Endothelial cell of umbilical vein (primary cell): ENCODE measurements at regions of chr5 and their contacts with region 1.

Region 1: GRCh38 chr5:38441453-38442246 is 114.8 kb downstream of the LIFR start:
- DNase-seq: peak; percentile 89
- H3K4me3 ChIP-seq: no peak overlapping the region
- H3K27ac ChIP-seq: no peak overlapping the region
- H3K4me1 ChIP-seq: no peaks in the 10 kb centered on the region
- H3K27me3 ChIP-seq: no peaks in the 10 kb centered on the region
- CTCF ChIP-seq: peak; percentile 89 to 96
- POLR2A ChIP-seq: no peak

Region 2: GRCh38 chr5:38382898-38383297 is 58.8 kb before region 1 on chr5:
- CTCF ChIA-PET with region 1: interaction called, 100 read pairs
- POLR2A ChIA-PET with region 1: no interaction called
- dilution Hi-C with region 1: no loop called
- intact Hi-C with region 1: loop called (anchors 1 kb)
- DNase-seq: peak; percentile 72
- H3K4me3 ChIP-seq: no peak overlapping the region
- H3K27ac ChIP-seq: no peak overlapping the region
- H3K4me1 ChIP-seq: no peaks in the 10 kb centered on the region
- H3K27me3 ChIP-seq: peaks cover under 1 to 2% of the 10 kb centered on the region in 2 experiments
- CTCF ChIP-seq: peak; percentile 80 to 81
- POLR2A ChIP-seq: no peak

Region 3: DNA sequence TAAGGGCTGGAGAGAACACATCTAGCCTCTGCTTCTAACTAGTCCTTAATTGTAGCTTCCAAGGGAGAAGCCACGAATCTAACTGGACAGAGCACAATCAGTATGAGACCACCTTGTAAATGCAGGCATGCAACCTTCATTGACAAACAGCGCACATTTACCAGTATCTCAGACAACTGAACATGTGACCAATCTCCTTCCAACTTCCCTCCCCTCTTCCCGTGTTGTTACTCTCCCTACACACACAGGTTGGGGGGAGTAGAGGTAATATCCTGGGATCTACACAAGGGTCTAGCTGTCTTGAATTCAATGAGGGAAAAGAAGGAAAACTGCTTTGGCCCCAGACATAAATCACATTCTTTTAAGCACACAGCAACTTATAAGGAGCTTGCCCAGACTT is 37.2 kb after region 1 on chr5:
- CTCF ChIA-PET with region 1: interaction called, 24 read pairs
- POLR2A ChIA-PET with region 1: no interaction called
- dilution Hi-C with region 1: no loop called
- intact Hi-C with region 1: no loop called
- DNase-seq: no peak
- H3K4me3 ChIP-seq: no peak overlapping the region
- H3K27ac ChIP-seq: no peak overlapping the region
- H3K4me1 ChIP-seq: peaks cover 4% of the 10 kb centered on the region
- H3K27me3 ChIP-seq: no peaks in the 10 kb centered on the region
- CTCF ChIP-seq: no peak
- POLR2A ChIP-seq: no peak

Region 4: GRCh38 chr5:38528162-38528703 is 86.6 kb after region 1 on chr5:
- CTCF ChIA-PET with region 1: interaction called, 17 read pairs
- POLR2A ChIA-PET with region 1: no interaction called
- dilution Hi-C with region 1: no loop called
- intact Hi-C with region 1: no loop called
- DNase-seq: no peak
- H3K4me3 ChIP-seq: no peak overlapping the region
- H3K27ac ChIP-seq: no peak overlapping the region
- H3K4me1 ChIP-seq: no peaks in the 10 kb centered on the region
- H3K27me3 ChIP-seq: no peaks in the 10 kb centered on the region
- CTCF ChIP-seq: no peak
- POLR2A ChIP-seq: no peak

Region 5: GRCh38 chr5:38615981-38616451 is 174.4 kb after region 1 on chr5:
- CTCF ChIA-PET with region 1: interaction called, 12 read pairs
- POLR2A ChIA-PET with region 1: no interaction called
- dilution Hi-C with region 1: no loop called
- intact Hi-C with region 1: no loop called
- DNase-seq: no peak
- H3K4me3 ChIP-seq: no peak overlapping the region
- H3K27ac ChIP-seq: no peak overlapping the region
- H3K4me1 ChIP-seq: no peaks in the 10 kb centered on the region
- H3K27me3 ChIP-seq: no peaks in the 10 kb centered on the region
- CTCF ChIP-seq: no peak
- POLR2A ChIP-seq: no peak

Region 6: GRCh38 chr5:38780950-38781349 is 339.3 kb after region 1 on chr5:
- CTCF ChIA-PET with region 1: interaction called, 31 read pairs
- POLR2A ChIA-PET with region 1: no interaction called
- dilution Hi-C with region 1: no loop called
- intact Hi-C with region 1: no loop called
- DNase-seq: peak; percentile 62
- H3K4me3 ChIP-seq: no peak overlapping the region
- H3K27ac ChIP-seq: no peak overlapping the region
- H3K4me1 ChIP-seq: peaks cover 29% of the 10 kb centered on the region
- H3K27me3 ChIP-seq: peaks cover 0 to 8% of the 10 kb centered on the region in 2 experiments
- CTCF ChIP-seq: peak in 1 of 2 donors; percentile 10
- POLR2A ChIP-seq: no peak